ENCODE measurements at regions of chr16 and their contacts with region 1.

Region 1: DNA sequence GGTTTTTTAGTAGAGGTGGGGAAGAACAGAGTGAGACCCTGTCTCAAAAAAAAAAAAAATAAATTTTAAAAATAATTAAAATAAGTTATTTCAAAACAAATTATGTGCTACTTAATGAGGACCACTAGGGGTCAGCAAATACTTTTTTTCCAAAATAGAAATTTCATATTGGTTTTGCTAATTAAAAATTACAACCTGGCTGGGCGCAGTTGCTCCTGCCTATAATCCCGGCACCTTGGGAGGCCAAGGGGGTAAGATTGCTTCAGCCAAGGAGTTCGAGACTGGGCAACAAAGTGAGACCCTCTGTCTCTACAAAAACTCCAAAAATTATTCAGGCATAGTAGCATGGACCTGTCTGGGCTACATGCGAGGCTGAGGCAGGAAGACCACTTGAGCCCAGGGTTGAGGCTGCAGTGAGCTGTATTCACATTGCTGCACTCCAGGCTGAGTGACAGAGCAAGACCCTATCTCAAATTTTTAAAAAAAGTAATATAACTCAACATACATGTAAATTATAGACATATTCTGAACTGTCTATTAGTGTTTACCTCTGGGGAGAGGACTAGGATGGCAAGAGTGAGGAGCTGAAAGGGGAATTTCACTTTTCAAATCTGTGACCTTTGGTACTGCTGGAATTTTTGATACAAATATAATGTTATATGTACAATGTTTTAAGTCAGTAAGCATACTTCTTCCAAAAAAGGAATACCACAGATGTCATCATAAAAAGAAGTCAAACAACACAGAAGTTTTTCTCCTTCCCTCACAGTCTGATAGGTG is 8.1 kb downstream of the MEIOB start:
- DNase-seq: no peak
- ATAC-seq: peak; percentile 58

Region 2: GRCh38 chr16:1923299-1924034 is 59.6 kb after region 1 on chr16:
- intact Hi-C with region 1: loop called in 1 of 2 experiments (anchors 5 kb)
- DNase-seq: peak; percentile 56 to 76
- ATAC-seq: peak; percentile 89

Region 3: GRCh38 chr16:1929578-1930337 is 65.9 kb after region 1 on chr16:
- intact Hi-C with region 1: loop called (anchors 5 kb)
- DNase-seq: peak; percentile 77 to 92
- ATAC-seq: peak; percentile 88

Region 4: GRCh38 chr16:1942810-1943726 is 79.2 kb after region 1 on chr16 and contains the start of gene MSRB1:
- intact Hi-C with region 1: no loop called
- DNase-seq: peak; percentile 100
- ATAC-seq: peak; percentile 83
- total RNA-seq, gene MSRB1: 46.0 to 46.6 TPM

Measured in left colon (tissue), 2 donors.